Calu3 (cell line): ENCODE measurements at regions of chr21 and their contacts with region 1.

Region 1: DNA sequence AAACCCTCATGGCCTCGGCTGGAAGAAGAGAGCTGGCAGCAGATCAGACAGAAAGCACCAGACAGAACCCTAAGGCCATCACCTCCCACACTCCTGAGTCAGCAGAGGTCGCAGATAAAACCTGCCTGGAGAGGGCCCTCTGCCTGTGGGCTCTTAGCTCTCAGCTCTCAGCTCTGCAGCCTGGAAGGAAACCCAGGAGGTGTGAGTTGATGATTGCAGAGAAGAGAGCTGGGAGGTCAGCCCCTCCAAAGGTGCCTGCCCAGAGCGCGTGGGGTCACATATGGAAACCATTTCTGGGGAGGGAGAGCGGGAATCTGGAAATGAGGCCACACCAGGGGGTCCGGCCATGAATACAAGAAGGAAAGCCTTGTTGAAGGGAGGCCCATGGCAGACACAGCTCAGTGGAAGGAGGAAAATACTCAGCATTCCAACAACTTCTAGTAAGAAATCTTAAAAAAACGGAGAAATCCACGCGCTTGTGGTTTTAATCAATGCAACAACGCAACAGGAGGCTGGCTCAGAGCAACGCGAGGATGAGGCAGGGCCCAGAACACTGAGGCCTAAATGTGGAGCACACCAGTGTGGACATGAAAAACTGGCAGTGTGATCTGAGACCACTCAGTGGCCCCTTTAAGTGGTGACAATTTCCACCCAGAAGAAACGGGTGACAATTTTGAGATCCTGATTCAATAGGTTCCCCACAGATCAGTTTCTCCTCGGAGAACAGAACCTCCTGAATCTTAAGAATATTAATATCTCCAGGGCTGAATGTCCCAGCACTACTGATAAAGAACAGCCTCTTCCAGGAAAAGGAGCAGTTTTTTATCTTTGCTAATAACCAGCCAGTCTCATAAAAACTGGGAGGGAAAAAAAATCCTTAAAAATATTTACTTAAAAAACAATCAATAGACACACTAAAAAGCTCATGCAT is 45.7 kb downstream of the PSMG1 start:
- DNase-seq: no peak
- H3K4me3 Mint-ChIP-seq: no peak overlapping the region
- H3K27ac Mint-ChIP-seq: no peak overlapping the region
- H3K4me1 Mint-ChIP-seq: no peaks in the 10 kb centered on the region
- H3K27me3 Mint-ChIP-seq: peaks cover 17% of the 10 kb centered on the region
- CTCF ChIP-seq: no peak

Region 2: DNA sequence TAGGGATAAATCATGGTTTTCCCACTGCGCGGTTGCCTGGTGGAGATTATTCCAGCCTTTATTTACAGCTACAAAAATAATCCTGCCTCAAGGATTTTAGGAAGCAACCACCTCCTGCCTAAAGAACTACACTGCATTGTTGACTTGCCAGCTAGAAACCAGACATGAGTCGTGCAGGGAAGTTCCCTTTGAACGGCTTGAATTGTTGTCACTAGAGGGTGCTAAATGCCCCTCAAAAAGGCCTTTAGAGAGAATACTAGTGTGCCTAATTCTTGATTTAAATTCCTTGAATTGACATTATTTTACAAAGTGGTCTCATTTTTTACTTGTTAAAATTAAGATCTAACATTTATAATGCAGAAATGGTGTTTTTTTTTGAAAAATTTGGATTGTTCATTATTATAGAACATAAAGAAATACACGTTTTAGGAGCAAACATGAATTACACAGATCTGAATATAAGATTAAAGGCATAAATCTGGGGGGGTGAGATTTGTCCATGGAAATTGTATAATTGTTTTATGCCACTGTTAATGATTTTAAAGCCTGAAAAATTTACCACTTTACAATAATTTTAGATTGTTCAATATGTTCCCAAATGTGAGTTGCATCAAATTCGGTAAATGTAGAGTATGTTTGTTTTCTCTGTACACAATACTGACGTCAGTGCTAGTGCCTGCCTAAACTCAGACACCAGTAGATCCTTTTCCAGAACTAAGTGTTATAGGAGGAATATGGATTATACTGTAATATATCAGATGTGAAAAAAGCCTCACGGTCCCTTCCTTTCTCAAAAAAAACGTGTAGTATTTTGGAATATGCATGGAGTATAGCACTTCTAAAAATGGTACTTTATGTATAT is 631.6 kb before region 1 on chr21:
- CTCF ChIA-PET with region 1: interaction called, 3 read pairs
- intact Hi-C with region 1: loop called (anchors 2 kb)
- DNase-seq: peak; percentile 33
- H3K4me3 Mint-ChIP-seq: no peak overlapping the region
- H3K27ac Mint-ChIP-seq: no peak overlapping the region
- H3K4me1 Mint-ChIP-seq: no peaks in the 10 kb centered on the region
- H3K27me3 Mint-ChIP-seq: peaks cover 32% of the 10 kb centered on the region
- CTCF ChIP-seq: peak; percentile 21

Region 3: GRCh38 chr21:38669176-38669575 is 468.3 kb before region 1 on chr21:
- CTCF ChIA-PET with region 1: interaction called, 11 read pairs
- intact Hi-C with region 1: loop called (anchors 10 kb)
- DNase-seq: peak; percentile 15
- H3K4me3 Mint-ChIP-seq: no peak overlapping the region
- H3K27ac Mint-ChIP-seq: no peak overlapping the region
- H3K4me1 Mint-ChIP-seq: no peaks in the 10 kb centered on the region
- H3K27me3 Mint-ChIP-seq: peaks cover 45% of the 10 kb centered on the region
- CTCF ChIP-seq: no peak

Region 4: DNA sequence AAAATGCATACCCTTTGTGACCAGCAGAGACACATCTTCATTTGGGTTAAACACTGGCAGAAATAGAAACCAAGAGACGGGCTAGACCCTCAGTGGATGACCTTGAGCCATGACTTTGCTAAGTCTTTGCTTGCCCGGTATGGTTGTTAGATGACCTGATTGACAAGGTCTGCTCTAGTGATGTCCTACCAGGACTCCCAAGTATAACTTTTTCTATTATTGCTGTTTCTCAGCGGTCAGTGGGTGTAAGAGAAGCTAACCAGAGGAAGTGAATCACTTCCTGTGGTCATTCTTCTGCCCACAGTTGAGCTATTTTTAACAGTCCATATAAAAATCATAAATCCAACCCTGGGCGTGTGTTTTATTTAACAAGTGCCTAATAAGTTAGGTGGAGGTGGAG is 458.0 kb before region 1 on chr21:
- CTCF ChIA-PET with region 1: no interaction called
- intact Hi-C with region 1: loop called (anchors 10 kb)
- DNase-seq: no peak
- H3K4me3 Mint-ChIP-seq: no peak overlapping the region
- H3K27ac Mint-ChIP-seq: no peak overlapping the region
- H3K4me1 Mint-ChIP-seq: no peaks in the 10 kb centered on the region
- H3K27me3 Mint-ChIP-seq: peaks cover 14% of the 10 kb centered on the region
- CTCF ChIP-seq: no peak

Region 5: DNA sequence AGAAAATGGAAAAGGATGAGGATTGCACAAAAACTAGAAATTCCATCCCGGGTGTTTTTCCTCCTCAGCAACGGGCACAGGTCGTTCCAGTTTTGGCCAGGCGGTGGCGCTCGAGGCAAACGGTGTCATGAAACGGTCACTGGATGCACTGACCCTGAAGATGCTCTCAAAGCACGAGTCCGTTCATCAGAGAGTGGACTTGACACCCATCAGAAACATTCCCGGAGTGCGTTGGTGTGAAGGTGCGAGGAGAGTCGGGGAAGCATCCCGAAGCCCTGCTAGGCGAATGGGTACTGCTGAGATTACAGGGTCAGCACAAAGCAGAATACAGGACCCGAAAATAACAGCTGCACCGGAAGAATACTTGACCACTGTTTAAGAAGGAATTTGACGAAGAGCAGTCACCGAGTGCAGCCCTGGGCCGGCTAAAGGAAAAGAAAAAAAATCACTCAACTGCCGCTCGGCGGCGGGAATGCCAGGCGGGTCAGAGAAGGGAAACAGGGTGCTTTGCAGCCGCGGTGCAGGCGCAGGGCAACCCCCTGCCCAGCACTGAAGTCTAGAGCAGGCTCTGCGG is 403.5 kb before region 1 on chr21:
- CTCF ChIA-PET with region 1: no interaction called
- intact Hi-C with region 1: loop called (anchors 5 kb)
- DNase-seq: peak; percentile 84
- H3K4me3 Mint-ChIP-seq: peak overlapping the region; percentile 60
- H3K27ac Mint-ChIP-seq: peak overlapping the region; percentile 72
- H3K4me1 Mint-ChIP-seq: peaks cover 18% of the 10 kb centered on the region
- H3K27me3 Mint-ChIP-seq: no peaks in the 10 kb centered on the region
- CTCF ChIP-seq: peak; percentile 86

Region 6: GRCh38 chr21:38805328-38806152 is 332.0 kb before region 1 on chr21 and contains the start of gene ETS2:
- CTCF ChIA-PET with region 1: no interaction called
- intact Hi-C with region 1: no loop called
- DNase-seq: peak; percentile 85
- H3K4me3 Mint-ChIP-seq: peak within 1 kb of the TSS; percentile 85
- H3K27ac Mint-ChIP-seq: peak within 1 kb of the TSS; percentile 98
- H3K4me1 Mint-ChIP-seq: peaks cover 52% of the 10 kb centered on the region
- H3K27me3 Mint-ChIP-seq: no peaks in the 10 kb centered on the region
- CTCF ChIP-seq: no peak
- total RNA-seq, gene ETS2: 49.9 and 63.3 TPM in 2 replicates

Region 7: GRCh38 chr21:39071623-39072214 is 65.8 kb before region 1 on chr21:
- CTCF ChIA-PET with region 1: no interaction called
- intact Hi-C with region 1: no loop called
- DNase-seq: no peak
- H3K4me3 Mint-ChIP-seq: no peak overlapping the region
- H3K27ac Mint-ChIP-seq: no peak overlapping the region
- H3K4me1 Mint-ChIP-seq: no peaks in the 10 kb centered on the region
- H3K27me3 Mint-ChIP-seq: peaks cover 21% of the 10 kb centered on the region
- CTCF ChIP-seq: no peak